Right ventricle myocardium superior (tissue), 1 donor: ENCODE measurements at regions of chr5 and their contacts with region 1.

Region 1: GRCh38 chr5:54421976-54422375 is 33.5 kb upstream of the HSPB3 start:
- DNase-seq: no peak
- ATAC-seq: no peak

Region 2: GRCh38 chr5:54492178-54492577 is 70.2 kb after region 1 on chr5:
- intact Hi-C with region 1: loop called (anchors 10 kb)
- DNase-seq: no peak
- ATAC-seq: no peak

Region 3: DNA sequence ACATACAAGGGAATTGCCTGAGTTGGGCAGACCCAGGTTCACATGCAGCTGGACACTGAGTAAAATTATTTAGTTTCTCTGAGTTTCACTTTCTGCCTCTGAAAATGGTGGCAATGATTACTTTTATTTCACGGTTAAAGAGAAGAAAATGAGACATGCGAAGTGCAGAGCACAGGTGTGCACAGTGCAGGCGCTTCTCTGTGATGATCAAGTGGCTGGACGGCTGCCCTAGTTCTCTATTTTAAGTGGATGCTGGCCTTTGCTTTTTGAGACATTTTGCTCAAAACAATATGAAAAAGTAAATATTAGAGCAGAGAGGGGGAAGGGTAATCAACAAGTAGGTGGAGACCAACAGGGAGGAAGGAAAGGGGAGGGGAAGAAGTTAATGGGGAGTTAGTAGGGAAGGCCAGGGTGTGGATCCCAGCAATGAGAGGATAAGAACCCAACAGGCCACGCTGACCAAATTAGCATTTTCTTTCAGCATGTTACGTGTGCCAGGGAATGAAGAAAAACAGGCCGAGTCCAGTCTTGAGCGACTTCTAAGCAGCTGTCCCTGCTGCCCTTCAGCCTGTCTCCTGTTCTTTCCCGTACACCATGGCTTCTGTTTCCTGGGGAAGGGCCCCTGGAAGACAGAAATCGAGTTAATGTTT is 111.7 kb after region 1 on chr5:
- intact Hi-C with region 1: no loop called
- DNase-seq: peak; percentile 36
- ATAC-seq: peak; percentile 65

Region 4: DNA sequence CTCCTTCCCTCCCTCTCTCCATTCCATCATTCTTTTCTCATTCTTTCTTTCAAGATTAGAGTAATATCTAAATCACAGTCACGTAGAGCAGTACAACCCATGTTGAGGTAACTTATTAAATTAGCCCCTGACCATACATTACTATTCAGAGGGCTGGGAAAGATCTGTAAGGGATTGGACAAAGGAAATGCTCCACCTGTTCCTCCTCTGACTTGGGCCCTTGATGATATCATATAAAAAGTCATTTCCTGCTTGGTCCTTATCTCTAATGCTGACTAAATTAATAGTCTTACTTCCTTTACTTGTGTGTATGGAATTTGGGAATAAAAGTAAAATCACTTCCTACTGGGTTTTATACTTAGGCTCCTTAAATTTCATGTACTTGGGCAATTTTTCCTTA is 136.4 kb after region 1 on chr5:
- intact Hi-C with region 1: no loop called
- DNase-seq: no peak
- ATAC-seq: no peak